OCI-LY7 (cell line): ENCODE measurements at regions of chr11 and their contacts with region 1.

Region 1: GRCh38 chr11:61061081-61061826 is 41.0 kb upstream of the CD5 start:
- DNase-seq: peak; percentile 75
- H3K4me3 ChIP-seq: peak overlapping the region; percentile 35
- H3K27ac ChIP-seq: peak overlapping the region; percentile 25
- H3K4me1 ChIP-seq: peaks cover 17% of the 10 kb centered on the region
- CTCF ChIP-seq: no peak

Region 2: GRCh38 chr11:60891103-60891741 is 170.0 kb before region 1 on chr11:
- CTCF ChIA-PET with region 1: no interaction called
- POLR2A ChIA-PET with region 1: no interaction called
- intact Hi-C with region 1: no loop called
- DNase-seq: no peak
- H3K4me3 ChIP-seq: no peak overlapping the region
- H3K27ac ChIP-seq: no peak overlapping the region
- H3K4me1 ChIP-seq: no peaks in the 10 kb centered on the region
- CTCF ChIP-seq: no peak

Region 3: DNA sequence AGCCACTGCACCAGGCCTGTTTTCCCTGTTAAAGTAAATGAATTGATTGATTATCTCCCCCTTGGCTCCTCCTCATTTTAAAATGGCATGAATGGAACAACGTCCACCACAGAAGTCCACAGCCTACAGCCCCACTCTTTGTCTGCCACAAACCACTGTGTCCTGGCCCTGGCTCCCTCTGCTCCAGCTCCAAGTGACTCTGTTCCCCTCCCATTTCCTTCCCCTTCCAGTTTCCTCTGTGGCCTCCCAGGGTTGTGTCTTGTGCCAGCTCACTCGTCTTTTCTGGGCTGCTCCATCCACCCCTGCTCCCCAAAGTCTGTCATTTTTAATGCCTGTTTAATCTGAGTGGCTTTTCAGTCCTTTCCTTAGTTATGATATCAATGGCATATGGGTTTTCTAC is 11.4 kb before region 1 on chr11:
- CTCF ChIA-PET with region 1: no interaction called
- POLR2A ChIA-PET with region 1: interaction called, 10 read pairs
- intact Hi-C with region 1: no loop called
- DNase-seq: no peak
- H3K4me3 ChIP-seq: no peak overlapping the region
- H3K27ac ChIP-seq: no peak overlapping the region
- H3K4me1 ChIP-seq: no peaks in the 10 kb centered on the region
- CTCF ChIP-seq: no peak

Region 4: DNA sequence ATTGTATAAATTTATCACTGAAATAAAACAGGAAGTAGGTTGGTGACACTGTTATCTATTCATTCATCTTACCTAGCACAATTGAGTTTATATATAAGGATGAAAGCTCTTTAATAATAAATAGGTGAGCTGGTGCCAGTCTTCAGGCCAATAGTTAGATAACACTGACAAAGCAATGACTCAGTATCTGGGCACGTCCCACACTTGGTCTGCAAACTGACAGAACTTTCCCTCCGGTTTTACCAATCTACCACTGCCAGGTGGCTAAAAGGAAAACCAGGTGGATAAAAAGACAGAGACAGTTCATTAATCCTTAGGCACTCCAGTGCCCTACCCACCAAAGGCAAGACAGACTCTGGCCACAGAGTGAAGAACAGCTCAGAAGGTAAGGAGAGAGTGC is 254.0 kb after region 1 on chr11:
- CTCF ChIA-PET with region 1: no interaction called
- POLR2A ChIA-PET with region 1: no interaction called
- intact Hi-C with region 1: no loop called
- DNase-seq: no peak
- H3K4me3 ChIP-seq: no peak overlapping the region
- H3K27ac ChIP-seq: no peak overlapping the region
- H3K4me1 ChIP-seq: no peaks in the 10 kb centered on the region
- CTCF ChIP-seq: no peak